SK-N-SH (cell line): ENCODE measurements at regions of chr7 and their contacts with region 1.

Region 1: DNA sequence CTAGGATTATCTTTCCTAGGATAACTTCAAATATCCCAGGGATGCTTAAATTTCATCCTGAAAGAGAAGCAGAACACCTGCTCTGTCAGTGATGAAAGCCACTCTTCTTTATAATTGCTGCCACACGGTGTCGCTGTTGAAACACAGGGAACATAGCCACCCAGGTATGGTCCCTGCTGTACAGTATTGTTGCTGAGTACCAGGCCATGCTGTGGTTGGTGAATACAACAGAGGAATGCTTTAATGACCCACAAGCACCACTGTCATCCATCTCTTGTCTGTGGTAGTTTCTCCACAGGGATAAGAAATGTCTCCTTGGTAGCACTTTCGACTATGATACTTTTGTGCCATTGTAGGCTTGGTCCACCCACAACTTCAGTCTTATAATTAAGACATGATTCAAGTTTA is 70.6 kb upstream of the STARD3NL start:
- DNase-seq: peak; percentile 57
- H3K4me3 ChIP-seq: no peak overlapping the region; a peak in 1 of 4 replicates
- H3K27ac ChIP-seq: no peak overlapping the region
- H3K4me1 ChIP-seq: no peaks in the 10 kb centered on the region; a peak in 1 of 4 replicates
- H3K27me3 ChIP-seq: no peaks in the 10 kb centered on the region
- CTCF ChIP-seq: peak; percentile 94
- EP300 ChIP-seq: no peak
- RAD21 ChIP-seq: peak; percentile 87

Region 2: DNA sequence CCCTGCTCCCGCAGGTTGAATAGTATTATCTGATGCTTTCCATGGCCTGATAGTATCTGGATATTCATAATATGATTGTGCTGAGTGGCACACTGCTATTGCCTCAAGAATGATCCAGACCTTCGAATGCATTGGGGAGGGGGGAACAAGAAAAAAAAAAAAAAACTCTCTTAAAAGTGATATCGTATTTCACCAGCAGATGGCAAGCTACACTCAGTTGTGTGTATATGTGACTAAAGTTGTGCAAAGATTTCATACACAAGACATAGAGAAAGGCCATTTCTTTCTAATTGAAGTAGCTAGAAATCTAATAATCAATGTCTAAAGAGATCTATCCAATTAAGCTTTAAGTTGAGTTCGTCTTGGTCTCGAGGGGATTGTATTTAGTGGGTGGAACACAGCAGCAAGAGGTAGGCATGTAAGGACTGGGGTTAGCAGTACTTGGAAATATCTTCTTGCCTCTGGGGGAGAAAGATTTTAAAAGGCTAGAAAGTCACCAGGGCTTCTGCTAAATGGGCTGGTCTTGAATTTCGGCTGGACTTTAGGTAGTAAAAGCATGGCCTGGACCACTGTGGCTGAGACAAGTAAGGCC is 206.2 kb before region 1 on chr7:
- CTCF ChIA-PET with region 1: interaction called, 20 read pairs
- POLR2A ChIA-PET with region 1: no interaction called
- DNase-seq: peak; percentile 47
- H3K4me3 ChIP-seq: peak overlapping the region in 1 of 2 experiments; percentile 4; a peak in 1 of 4 replicates
- H3K27ac ChIP-seq: no peak overlapping the region
- H3K4me1 ChIP-seq: peaks cover 0 to 8% of the 10 kb centered on the region in 2 experiments; a peak in 3 of 4 replicates
- H3K27me3 ChIP-seq: no peaks in the 10 kb centered on the region
- CTCF ChIP-seq: peak; percentile 83
- EP300 ChIP-seq: no peak
- RAD21 ChIP-seq: peak; percentile 85

Region 3: GRCh38 chr7:37987732-37988131 is 119.8 kb before region 1 on chr7:
- CTCF ChIA-PET with region 1: no interaction called
- POLR2A ChIA-PET with region 1: no interaction called
- DNase-seq: no peak
- H3K4me3 ChIP-seq: no peak overlapping the region
- H3K27ac ChIP-seq: no peak overlapping the region
- H3K4me1 ChIP-seq: no peaks in the 10 kb centered on the region
- H3K27me3 ChIP-seq: no peaks in the 10 kb centered on the region
- CTCF ChIP-seq: no peak
- EP300 ChIP-seq: no peak
- RAD21 ChIP-seq: no peak

Region 4: GRCh38 chr7:38070718-38071117 is 36.8 kb before region 1 on chr7:
- CTCF ChIA-PET with region 1: interaction called, 11 read pairs
- POLR2A ChIA-PET with region 1: no interaction called
- DNase-seq: peak; percentile 73
- H3K4me3 ChIP-seq: no peak overlapping the region
- H3K27ac ChIP-seq: peak overlapping the region in 1 of 2 experiments; percentile 69; a peak in 2 of 4 replicates
- H3K4me1 ChIP-seq: no peaks in the 10 kb centered on the region; a peak in 1 of 4 replicates
- H3K27me3 ChIP-seq: no peaks in the 10 kb centered on the region
- CTCF ChIP-seq: peak; percentile 69
- EP300 ChIP-seq: peak in 1 of 2 experiments; percentile 72; a peak in 2 of 4 replicates
- RAD21 ChIP-seq: peak; percentile 54

Region 5: GRCh38 chr7:38127216-38128207 is 20.0 kb after region 1 on chr7:
- CTCF ChIA-PET with region 1: interaction called, 10 read pairs
- POLR2A ChIA-PET with region 1: no interaction called
- DNase-seq: no peak
- H3K4me3 ChIP-seq: no peak overlapping the region
- H3K27ac ChIP-seq: no peak overlapping the region
- H3K4me1 ChIP-seq: no peaks in the 10 kb centered on the region
- H3K27me3 ChIP-seq: no peaks in the 10 kb centered on the region; the same call in 1 of the 2 replicates
- CTCF ChIP-seq: no peak
- EP300 ChIP-seq: no peak
- RAD21 ChIP-seq: no peak

Region 6: GRCh38 chr7:38222481-38223096 is 115.1 kb after region 1 on chr7:
- CTCF ChIA-PET with region 1: interaction called, 174 read pairs
- POLR2A ChIA-PET with region 1: no interaction called
- DNase-seq: peak; percentile 50
- H3K4me3 ChIP-seq: no peak overlapping the region; a peak in 1 of 4 replicates
- H3K27ac ChIP-seq: no peak overlapping the region
- H3K4me1 ChIP-seq: no peaks in the 10 kb centered on the region
- H3K27me3 ChIP-seq: no peaks in the 10 kb centered on the region
- CTCF ChIP-seq: peak; percentile 98
- EP300 ChIP-seq: no peak
- RAD21 ChIP-seq: peak; percentile 93

Region 7: GRCh38 chr7:38291117-38291647 is 183.7 kb after region 1 on chr7:
- CTCF ChIA-PET with region 1: no interaction called
- POLR2A ChIA-PET with region 1: no interaction called
- DNase-seq: no peak
- H3K4me3 ChIP-seq: no peak overlapping the region
- H3K27ac ChIP-seq: no peak overlapping the region
- H3K4me1 ChIP-seq: no peaks in the 10 kb centered on the region; a peak in 1 of 4 replicates
- H3K27me3 ChIP-seq: peaks cover 12% of the 10 kb centered on the region; the same call in 1 of the 2 replicates
- CTCF ChIP-seq: no peak
- EP300 ChIP-seq: no peak
- RAD21 ChIP-seq: no peak

Region 8: DNA sequence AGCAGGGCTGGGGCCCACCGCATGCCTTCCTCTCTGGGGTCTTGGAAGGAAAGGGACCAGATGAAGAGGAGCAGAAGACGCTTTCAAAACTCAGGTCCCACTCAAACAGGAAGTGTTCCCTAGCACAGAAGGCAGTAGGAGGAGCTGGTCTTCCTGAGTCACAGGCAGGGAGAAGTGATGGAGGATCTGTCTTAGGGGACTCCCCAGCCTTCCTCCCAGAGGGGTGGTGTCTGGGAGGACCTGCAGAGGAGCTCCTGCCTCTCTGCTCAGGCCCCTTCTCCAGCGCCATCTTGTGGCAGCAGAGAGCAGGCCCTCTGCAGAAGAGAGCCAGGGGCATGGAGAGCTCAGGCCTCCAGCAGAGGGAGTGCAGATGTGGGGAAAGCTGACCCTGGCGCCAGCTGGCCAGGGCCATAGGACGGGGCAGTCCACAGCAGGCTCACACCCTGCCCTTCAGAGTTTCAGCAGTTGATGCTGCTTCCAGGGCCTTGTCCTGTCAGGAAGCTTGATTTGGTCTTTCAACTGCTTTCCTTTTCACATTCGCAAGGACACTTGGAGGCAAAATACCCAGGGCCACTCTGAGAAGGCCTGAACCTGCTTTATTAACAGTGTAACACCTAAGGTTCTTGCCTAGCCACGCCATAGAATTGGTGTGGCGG is 228.1 kb after region 1 on chr7:
- CTCF ChIA-PET with region 1: interaction called, 17 read pairs
- POLR2A ChIA-PET with region 1: no interaction called
- DNase-seq: peak; percentile 79
- H3K4me3 ChIP-seq: peak overlapping the region in 1 of 2 experiments; percentile 25; a peak in 1 of 4 replicates
- H3K27ac ChIP-seq: no peak overlapping the region
- H3K4me1 ChIP-seq: peaks cover 0 to 2% of the 10 kb centered on the region in 2 experiments; a peak in 1 of 4 replicates
- H3K27me3 ChIP-seq: no peaks in the 10 kb centered on the region
- CTCF ChIP-seq: peak; percentile 94
- EP300 ChIP-seq: no peak
- RAD21 ChIP-seq: peak; percentile 72